CD4-positive, alpha-beta memory T cell (primary cell): ENCODE measurements at regions of chr5 and their contacts with region 1.

Region 1: GRCh38 chr5:154857530-154858296 is 714 bp upstream of the CNOT8 start:
- DNase-seq: peak; percentile 87 to 95 (median 91)
- H3K4me3 ChIP-seq: peak overlapping the region; percentile 78 to 88
- H3K4me3 Mint-ChIP-seq: peak overlapping the region; percentile 89 to 97 (median 91)
- H3K27ac ChIP-seq: peak overlapping the region; percentile 94
- H3K27ac Mint-ChIP-seq: peak overlapping the region; percentile 93 to 99 (median 98)
- H3K4me1 ChIP-seq: peaks cover 36% of the 10 kb centered on the region
- H3K4me1 Mint-ChIP-seq: peaks cover 25 to 49% (median 33%) of the 10 kb centered on the region in 4 donors
- H3K27me3 ChIP-seq: no peaks in the 10 kb centered on the region
- H3K27me3 Mint-ChIP-seq: no peaks in the 10 kb centered on the region

Region 2: DNA sequence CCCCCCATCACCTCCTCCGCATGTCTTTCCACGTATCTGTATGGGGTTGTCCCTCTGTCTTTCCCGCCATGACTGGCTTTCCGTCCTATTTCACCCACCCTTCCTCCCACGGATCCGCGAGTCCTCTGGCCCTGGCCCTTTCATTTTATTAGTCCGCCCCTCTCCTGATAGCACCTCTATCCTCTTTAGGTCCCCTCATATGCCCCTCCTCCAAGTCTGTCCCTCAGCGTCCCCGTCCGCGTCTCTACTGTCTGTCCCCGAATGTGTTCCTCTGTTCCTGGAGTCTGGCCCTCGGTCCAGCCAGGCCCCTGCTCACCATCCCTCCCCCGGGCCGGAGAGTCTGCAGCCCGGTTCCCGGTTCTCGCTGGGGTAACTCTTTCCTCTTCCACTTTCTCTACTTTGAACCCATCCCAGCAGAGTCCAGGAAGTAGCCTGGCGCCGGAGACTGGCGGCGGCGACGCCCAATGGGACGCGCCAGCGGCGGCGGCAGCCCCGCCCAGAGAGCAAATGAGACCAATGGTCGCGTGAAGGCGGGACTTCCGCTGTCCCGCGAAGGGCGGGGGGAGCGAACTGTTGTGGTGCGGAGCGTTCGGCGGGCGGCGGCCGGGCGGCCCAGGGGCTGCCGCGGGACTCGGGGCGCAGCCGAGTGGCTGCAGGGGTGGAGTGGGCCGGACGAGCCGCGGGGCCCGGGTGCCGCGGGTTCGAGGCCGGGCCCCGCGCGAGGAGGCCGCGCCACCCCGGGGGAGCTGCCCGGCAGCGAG is 412.1 kb before region 1 on chr5 and contains the start of gene SAP30L:
- CTCF ChIA-PET with region 1: no interaction called
- POLR2A ChIA-PET with region 1: no interaction called
- intact Hi-C with region 1: loop called (anchors 1 kb)
- DNase-seq: peak; percentile 93 to 99 (median 96)
- H3K4me3 ChIP-seq: peak within 1 kb of the TSS; percentile 95 to 99
- H3K4me3 Mint-ChIP-seq: peak within 1 kb of the TSS; percentile 97 to 100 (median 99)
- H3K27ac ChIP-seq: peak within 1 kb of the TSS; percentile 66
- H3K27ac Mint-ChIP-seq: peak within 1 kb of the TSS; percentile 83 to 100 (median 96)
- H3K4me1 ChIP-seq: peaks cover 46% of the 10 kb centered on the region
- H3K4me1 Mint-ChIP-seq: peaks cover 40 to 75% (median 52%) of the 10 kb centered on the region in 4 donors
- H3K27me3 ChIP-seq: no peaks in the 10 kb centered on the region
- H3K27me3 Mint-ChIP-seq: no peaks in the 10 kb centered on the region
- total RNA-seq, gene SAP30L: 36.9 to 47.5 TPM

Region 3: GRCh38 chr5:154683101-154683880 is 174.4 kb before region 1 on chr5:
- CTCF ChIA-PET with region 1: no interaction called
- POLR2A ChIA-PET with region 1: no interaction called
- intact Hi-C with region 1: loop called (anchors 1 kb)
- DNase-seq: no peak
- H3K4me3 ChIP-seq: peak overlapping the region in 1 of 2 donors; percentile 58
- H3K4me3 Mint-ChIP-seq: peak overlapping the region; percentile 55 to 78 (median 70)
- H3K27ac ChIP-seq: no peak overlapping the region
- H3K27ac Mint-ChIP-seq: peak overlapping the region in 5 of 7 donors; percentile 7 to 72 (median 24)
- H3K4me1 ChIP-seq: peaks cover 7% of the 10 kb centered on the region
- H3K4me1 Mint-ChIP-seq: peaks cover 3 to 7% (median 5%) of the 10 kb centered on the region in 4 donors
- H3K27me3 ChIP-seq: no peaks in the 10 kb centered on the region
- H3K27me3 Mint-ChIP-seq: peaks cover 0 to 2% of the 10 kb centered on the region in 2 donors

Region 4: GRCh38 chr5:154811653-154812365 is 45.9 kb before region 1 on chr5:
- CTCF ChIA-PET with region 1: interaction called, 4 read pairs
- POLR2A ChIA-PET with region 1: interaction called, 4 read pairs
- intact Hi-C with region 1: loop called (anchors 5 kb)
- DNase-seq: peak; percentile 58 to 66 (median 62)
- H3K4me3 ChIP-seq: no peak overlapping the region
- H3K4me3 Mint-ChIP-seq: peak overlapping the region in 1 of 8 donors; percentile 16
- H3K27ac ChIP-seq: no peak overlapping the region
- H3K27ac Mint-ChIP-seq: peak overlapping the region in 4 of 7 donors; percentile 9 to 91 (median 46)
- H3K4me1 ChIP-seq: peaks cover 15% of the 10 kb centered on the region
- H3K4me1 Mint-ChIP-seq: peaks cover 14 to 37% (median 21%) of the 10 kb centered on the region in 4 donors
- H3K27me3 ChIP-seq: no peaks in the 10 kb centered on the region
- H3K27me3 Mint-ChIP-seq: no peaks in the 10 kb centered on the region

Region 5: GRCh38 chr5:154868702-154869101 is 11.0 kb after region 1 on chr5:
- CTCF ChIA-PET with region 1: interaction called, 11 read pairs
- POLR2A ChIA-PET with region 1: interaction called, 3 read pairs
- intact Hi-C with region 1: no loop called
- DNase-seq: peak in 1 of 5 donors; percentile 16
- H3K4me3 ChIP-seq: no peak overlapping the region
- H3K4me3 Mint-ChIP-seq: no peak overlapping the region
- H3K27ac ChIP-seq: no peak overlapping the region
- H3K27ac Mint-ChIP-seq: peak overlapping the region in 3 of 7 donors; percentile 25 to 46 (median 37)
- H3K4me1 ChIP-seq: no peaks in the 10 kb centered on the region
- H3K4me1 Mint-ChIP-seq: peaks cover 10 to 22% (median 14%) of the 10 kb centered on the region in 4 donors
- H3K27me3 ChIP-seq: no peaks in the 10 kb centered on the region
- H3K27me3 Mint-ChIP-seq: no peaks in the 10 kb centered on the region